Posterior vena cava (tissue), 2 donors: ENCODE measurements at regions of chr18 and their contacts with region 1.

Region 1: GRCh38 chr18:48475635-48476549 is 62.9 kb upstream of the CTIF start:
- DNase-seq: no peak

Region 2: GRCh38 chr18:48538531-48539405 is 62.9 kb after region 1 on chr18 and contains the start of gene CTIF:
- intact Hi-C with region 1: no loop called
- DNase-seq: peak; percentile 98
- total RNA-seq, gene CTIF: 87.8 to 116 TPM

Region 3: DNA sequence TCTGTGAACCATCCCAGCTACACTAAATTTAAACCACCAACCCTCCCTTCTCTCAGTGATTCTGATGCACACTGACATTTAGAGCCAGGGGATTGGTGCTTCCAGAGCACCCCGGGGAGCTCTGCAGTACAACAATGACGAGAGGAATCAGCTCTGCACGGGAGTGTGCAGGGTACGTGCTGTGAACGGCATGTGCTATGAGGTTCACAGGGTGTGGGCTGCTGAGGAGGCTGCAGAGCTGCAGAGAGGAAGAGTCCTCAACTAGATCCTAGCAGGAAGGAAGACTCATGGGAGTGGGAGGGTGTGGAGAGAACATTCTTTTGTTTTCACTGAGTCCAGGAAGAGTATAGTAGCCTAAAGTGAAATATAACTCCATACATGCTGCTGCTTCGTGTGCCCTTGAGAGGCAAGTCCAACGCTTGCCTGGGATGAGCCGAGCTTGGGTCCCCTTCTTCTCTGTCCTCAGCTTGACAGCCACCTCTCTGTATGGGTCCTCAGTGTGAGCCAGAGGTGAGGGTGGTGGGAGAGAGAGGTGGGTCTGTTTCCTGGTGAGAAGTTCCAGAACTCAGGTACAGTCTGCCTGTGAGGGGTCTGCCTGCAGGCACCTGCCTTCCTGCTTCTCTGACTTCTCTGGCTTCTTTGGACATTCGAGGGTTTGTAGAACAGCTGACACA is 181.7 kb after region 1 on chr18:
- intact Hi-C with region 1: loop called (anchors 2 kb)
- DNase-seq: no peak

Region 4: DNA sequence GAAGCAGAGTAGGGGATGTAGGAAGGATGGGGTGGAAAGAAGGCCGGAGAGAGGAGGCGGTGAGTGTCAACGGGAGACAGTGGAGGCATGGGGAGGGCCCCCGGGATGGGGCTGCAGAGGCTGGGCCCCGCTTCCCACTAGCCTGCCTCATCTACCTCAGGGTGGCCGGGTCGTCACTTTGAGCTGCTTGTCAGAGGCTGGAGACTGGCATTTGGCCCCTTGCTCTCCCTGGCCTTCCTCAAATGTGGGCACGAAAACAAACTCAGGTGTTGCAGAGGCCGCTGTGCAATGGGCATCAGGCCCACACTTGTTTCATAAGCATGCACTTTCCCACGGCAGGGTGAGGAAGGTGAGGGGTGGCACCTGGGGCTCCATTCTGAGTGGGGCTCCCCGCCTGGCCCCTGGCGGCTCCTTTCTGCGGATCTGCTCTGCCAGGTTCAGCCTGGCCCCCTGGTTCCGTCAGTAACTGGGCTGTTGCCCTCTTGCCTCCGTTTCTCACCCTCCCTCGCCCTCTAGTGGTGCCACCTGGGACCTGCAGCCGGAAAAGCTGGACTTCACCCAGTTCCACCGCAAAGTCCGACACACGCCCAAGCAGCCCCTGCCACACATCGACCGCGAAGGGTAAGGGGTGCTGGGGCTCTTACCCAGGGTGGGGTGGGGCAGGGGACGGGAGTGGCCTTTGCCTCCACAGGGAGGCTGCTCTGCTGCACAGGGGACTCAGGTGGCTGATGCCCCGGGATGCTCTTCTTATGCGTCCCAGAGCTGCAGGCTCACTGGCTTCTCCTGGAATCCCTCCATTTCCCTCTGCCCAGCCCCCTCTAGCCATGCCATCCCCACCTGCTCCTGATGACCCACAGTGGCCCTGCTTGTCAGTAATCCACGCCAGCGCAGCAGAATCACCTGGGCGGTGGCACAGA is 188.3 kb after region 1 on chr18:
- intact Hi-C with region 1: loop called (anchors 2 kb)
- DNase-seq: peak; percentile 90